Psoas muscle (tissue), 8 donors: ENCODE measurements at regions of chr6 and their contacts with region 1.

Region 1: DNA sequence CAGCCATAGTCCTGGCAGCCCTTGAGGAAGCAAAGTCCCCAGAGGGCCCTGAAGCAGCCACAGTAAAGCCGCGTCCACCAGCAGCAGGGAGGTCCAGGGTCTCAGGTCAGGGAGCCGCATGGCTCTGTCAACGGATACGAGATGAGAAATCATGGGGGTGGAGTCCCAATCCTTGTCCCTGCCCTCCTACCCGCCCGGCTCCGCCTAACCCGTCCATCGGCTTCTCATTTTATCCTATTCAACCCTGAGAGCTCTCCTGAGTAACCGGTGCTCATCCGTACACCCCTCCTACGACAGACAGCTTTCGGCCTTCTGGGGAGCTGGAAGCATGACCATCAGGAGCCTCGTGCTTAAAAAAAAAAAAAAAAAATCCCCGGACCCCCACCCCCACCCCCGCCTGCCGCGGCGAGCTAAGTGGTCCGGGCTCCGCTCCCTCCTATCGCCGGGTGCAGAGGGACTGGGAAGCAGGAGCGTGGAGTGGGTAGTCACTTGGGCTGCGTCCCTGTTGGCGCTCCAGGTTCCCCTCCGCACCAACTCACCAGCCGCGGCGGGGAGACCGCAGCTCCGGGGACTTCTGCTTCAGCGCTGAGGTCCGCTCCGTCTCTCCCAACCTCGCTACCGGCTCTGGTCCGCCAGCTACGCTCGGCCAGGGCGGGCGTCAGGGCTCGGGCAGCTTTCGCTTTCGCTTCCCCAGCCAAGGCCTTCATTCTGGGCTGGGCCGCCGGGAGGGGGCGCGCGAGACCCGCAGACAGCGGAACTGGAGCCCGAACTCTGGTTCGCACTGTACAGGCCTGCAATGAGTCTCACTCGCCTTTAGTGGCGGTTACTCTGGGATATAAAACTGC is at the start of gene TAP2:
- DNase-seq: peak; percentile 96 to 98
- ATAC-seq: peak; percentile 97 to 98 (median 98)
- H3K4me3 ChIP-seq: peak within 1 kb of the TSS; percentile 94
- H3K27ac ChIP-seq: peak within 1 kb of the TSS; percentile 95
- H3K4me1 ChIP-seq: peaks cover 12% of the 10 kb centered on the region
- H3K27me3 ChIP-seq: no peaks in the 10 kb centered on the region
- CTCF ChIP-seq: peak; percentile 96
- total RNA-seq, gene TAP2: 13.6 to 18.5 (median 16.5) TPM

Region 2: DNA sequence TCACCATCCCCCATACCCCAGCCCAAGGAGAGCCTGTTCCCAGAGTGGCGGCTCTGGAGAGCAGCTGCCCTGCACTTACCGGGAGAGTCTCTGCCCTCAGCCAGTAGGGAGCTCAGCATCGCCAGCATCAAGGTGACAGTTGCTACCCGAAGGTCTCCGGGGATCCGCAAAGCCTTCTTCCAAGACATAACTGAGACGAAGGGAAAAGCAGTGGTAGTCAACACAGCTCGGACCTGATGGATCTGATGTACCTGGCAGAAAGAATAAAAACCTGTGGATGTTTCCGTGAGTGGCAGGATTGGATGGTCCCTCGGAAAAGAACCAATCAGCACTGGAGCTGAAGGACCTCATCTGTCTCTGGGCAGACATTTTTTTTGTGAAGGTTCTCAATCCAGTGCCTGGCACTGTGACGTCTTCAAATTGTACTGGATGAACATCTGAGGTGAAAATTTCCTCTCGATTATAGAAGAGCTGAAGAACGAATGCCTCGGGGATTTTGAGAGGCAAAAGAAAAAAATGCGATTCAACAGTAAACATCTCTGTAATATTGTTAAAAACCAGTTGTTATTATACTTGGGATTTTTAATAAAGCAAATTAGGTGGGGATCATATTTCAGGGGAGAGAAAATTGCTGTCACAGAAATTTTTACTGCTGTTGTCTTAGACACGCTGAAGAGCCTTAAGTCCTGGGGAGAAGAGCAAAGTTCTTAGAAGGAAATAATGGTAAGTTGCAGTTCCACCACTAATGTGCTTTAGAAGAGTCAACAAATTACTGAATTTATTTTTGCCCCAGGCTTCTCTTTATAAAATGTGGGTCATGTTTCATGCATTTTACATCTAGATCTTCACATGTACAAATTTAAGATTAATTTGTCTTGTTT is 171.7 kb before region 1 on chr6 and contains the start of gene HLA-DQB1:
- intact Hi-C with region 1: no loop called
- DNase-seq: no peak
- ATAC-seq: peak in 3 of 4 donors; percentile 46 to 77 (median 73)
- H3K4me3 ChIP-seq: no peak within 1 kb of the TSS
- H3K27ac ChIP-seq: no peak within 1 kb of the TSS
- H3K4me1 ChIP-seq: no peaks in the 10 kb centered on the region
- H3K27me3 ChIP-seq: peaks cover 0 to 4% (median 0%) of the 10 kb centered on the region in 3 donors
- CTCF ChIP-seq: no peak
- total RNA-seq, gene HLA-DQB1: 2.9 to 5.4 (median 4.2) TPM

Region 3: GRCh38 chr6:32794510-32794909 is 43.8 kb before region 1 on chr6:
- intact Hi-C with region 1: no loop called
- DNase-seq: no peak
- ATAC-seq: no peak
- H3K4me3 ChIP-seq: no peak overlapping the region
- H3K27ac ChIP-seq: no peak overlapping the region
- H3K4me1 ChIP-seq: no peaks in the 10 kb centered on the region
- H3K27me3 ChIP-seq: peaks cover 0 to 54% (median 2%) of the 10 kb centered on the region in 3 donors
- CTCF ChIP-seq: no peak

Region 4: DNA sequence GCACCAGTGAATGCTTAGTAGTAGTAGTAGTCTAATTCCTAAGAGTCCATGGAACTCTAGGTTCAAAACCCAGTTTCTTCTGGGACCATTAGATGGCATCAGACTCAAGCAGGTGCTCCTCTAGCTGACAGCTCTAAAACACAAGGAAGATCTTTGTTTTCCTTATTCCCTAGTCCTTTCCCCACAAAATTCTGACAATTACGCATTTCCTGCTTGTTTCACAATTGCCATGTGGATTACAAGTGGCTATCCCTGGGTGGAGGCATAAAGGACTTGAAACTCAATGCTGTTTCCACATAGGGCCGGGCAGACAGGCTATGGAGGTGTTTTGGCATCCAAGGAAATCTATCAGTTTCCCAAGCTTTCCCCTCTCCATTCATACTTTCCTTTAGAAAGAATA is 12.4 kb before region 1 on chr6:
- intact Hi-C with region 1: no loop called
- DNase-seq: no peak
- ATAC-seq: peak in 2 of 4 donors; percentile 33 to 76
- H3K4me3 ChIP-seq: no peak overlapping the region
- H3K27ac ChIP-seq: no peak overlapping the region
- H3K4me1 ChIP-seq: no peaks in the 10 kb centered on the region
- H3K27me3 ChIP-seq: no peaks in the 10 kb centered on the region
- CTCF ChIP-seq: peak; percentile 50

Region 5: GRCh38 chr6:32853541-32854375 is 15.4 kb after region 1 on chr6 and contains the starts of genes PSMB9 and TAP1:
- intact Hi-C with region 1: loop called (anchors 2 kb)
- DNase-seq: peak; percentile 93 to 97
- ATAC-seq: peak; percentile 95 to 97 (median 96)
- H3K4me3 ChIP-seq: peak within 1 kb of the TSS; percentile 92
- H3K27ac ChIP-seq: peak within 1 kb of the TSS; percentile 93
- H3K4me1 ChIP-seq: peaks cover 13% of the 10 kb centered on the region
- H3K27me3 ChIP-seq: no peaks in the 10 kb centered on the region
- CTCF ChIP-seq: peak; percentile 70
- total RNA-seq, gene PSMB9: 6.6 to 10.5 (median 10.0) TPM
- total RNA-seq, gene TAP1: 14.1 to 23.5 (median 16.8) TPM

Region 6: DNA sequence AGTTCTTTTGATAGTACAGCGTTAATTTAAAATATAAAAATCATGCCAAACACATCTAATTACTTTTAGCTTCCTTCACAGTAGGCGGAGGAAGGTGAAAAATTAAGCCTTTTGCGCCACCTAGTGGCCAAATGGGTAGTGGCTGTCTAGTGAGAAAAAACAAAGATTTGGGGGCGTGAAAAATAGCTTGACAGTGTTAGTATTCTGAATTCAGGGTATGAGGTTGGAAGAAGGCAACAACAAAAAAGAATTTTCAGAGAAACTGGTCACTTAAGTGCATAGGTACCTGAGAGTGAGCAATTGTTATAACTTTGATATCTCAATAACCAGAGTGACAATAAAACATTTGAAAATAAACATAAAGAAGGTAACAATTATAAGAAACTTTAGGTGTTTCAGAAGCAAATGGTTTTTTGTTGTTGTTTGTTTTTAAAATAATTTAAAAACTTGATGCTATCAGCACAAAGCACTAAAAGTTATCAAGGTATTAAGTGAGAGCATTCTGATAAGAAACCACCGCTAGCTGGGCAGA is 30.0 kb after region 1 on chr6:
- intact Hi-C with region 1: loop called (anchors 1 to 2 kb)
- DNase-seq: peak; percentile 73 to 81
- ATAC-seq: peak; percentile 61 to 89 (median 74)
- H3K4me3 ChIP-seq: no peak overlapping the region
- H3K27ac ChIP-seq: no peak overlapping the region
- H3K4me1 ChIP-seq: no peaks in the 10 kb centered on the region
- H3K27me3 ChIP-seq: peaks cover 0 to 3% (median 0%) of the 10 kb centered on the region in 3 donors
- CTCF ChIP-seq: peak; percentile 94